Vagina (tissue), 2 donors: ENCODE measurements at regions of chr3 and their contacts with region 1.

Region 1: DNA sequence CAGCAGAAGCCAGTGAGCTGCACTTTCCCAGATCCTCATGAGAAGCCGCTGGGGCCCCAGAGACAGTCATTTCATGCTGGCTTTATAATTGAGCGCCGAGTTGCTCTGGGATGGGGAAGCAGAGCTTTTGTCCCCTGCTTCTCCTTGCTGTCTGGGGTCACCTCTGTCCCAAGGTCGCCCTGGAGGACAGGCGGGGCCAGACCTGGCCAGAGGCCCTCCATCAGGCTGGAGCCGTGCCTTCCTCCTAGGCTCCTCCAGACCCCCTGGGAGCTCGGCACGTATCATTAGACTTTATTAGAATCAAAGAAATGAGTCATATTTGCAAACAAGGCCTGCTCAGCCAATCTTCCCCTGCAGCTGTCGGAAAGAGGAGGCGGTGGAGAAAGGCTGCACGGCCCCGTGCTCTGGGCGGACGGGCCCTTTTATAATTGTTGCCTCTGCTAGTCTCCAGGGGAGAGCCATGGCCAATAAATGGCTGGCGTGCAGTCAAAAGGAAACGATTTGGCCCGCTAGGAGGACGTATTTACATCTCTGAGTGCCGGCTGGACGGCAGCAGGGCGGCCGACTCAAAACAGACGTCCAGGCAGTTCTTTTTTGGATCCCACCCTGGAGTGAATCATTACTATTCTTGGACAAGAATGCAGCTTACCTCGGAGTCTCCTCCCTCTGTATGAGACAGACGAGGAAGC is 50.4 kb downstream of the SLC6A6 start:
- DNase-seq: peak in 1 of 2 donors; percentile 98
- H3K4me3 ChIP-seq: no peak overlapping the region
- H3K27ac ChIP-seq: peak overlapping the region; percentile 74
- H3K4me1 ChIP-seq: peaks cover 37% of the 10 kb centered on the region
- H3K27me3 ChIP-seq: no peaks in the 10 kb centered on the region
- CTCF ChIP-seq: no peak
- POLR2A ChIP-seq: no peak

Region 2: GRCh38 chr3:14403619-14404155 is 49.1 kb before region 1 on chr3:
- intact Hi-C with region 1: loop called (anchors 2 kb)
- DNase-seq: no peak
- H3K4me3 ChIP-seq: peak overlapping the region; percentile 68 to 89
- H3K27ac ChIP-seq: peak overlapping the region; percentile 81
- H3K4me1 ChIP-seq: peaks cover 45% of the 10 kb centered on the region
- H3K27me3 ChIP-seq: no peaks in the 10 kb centered on the region
- CTCF ChIP-seq: no peak
- POLR2A ChIP-seq: no peak